PC-3 (cell line): ENCODE measurements at regions of chr9 and their contacts with region 1.

Region 1: DNA sequence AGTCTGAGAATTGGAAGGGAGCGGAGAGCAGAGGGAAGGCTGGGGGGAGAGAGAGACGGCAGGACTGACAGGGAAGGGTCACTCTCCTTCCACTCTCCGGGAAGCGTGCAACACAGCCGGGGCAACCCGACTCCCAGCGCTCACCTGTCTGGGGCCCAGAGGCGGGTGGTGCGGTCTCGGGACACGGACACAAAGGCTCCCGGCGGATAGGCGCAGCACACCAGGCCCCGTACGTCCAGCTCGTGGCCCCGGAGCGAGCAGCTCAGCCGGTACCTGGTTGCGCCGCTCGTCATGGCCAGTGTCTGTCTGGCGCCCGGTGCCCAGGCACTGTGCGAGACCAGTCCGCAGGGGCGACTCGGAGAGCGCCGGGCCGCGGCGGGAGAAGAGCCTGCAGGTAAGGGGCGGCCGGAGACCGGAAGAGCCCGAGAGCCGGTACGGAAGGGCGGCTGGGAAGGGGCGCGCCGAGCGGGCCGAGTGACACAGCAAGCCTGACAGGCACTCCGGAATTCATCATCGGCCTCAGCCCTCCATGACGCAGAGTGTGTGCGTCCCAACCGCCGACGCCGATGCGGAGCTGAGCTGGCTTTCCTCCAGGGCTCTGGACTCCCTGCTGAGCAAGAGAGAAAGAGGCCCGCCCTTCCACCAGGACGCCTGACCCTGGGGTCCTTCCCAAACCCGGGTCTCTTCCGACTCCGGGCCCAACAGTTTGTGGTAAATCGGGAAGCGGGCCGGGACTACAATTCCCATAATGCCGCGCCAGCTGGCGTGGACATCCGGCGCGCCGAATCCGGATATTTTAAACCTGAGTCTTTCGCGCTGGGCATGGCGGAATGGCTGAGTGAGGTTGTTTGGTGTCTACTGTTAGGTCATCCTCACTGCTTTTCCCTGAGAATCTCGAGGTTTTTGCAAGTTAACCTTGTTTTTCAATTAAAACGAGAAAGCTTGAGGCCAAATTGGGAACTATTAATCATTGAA is at the start of gene PLAA:
- DNase-seq: peak; percentile 85
- ATAC-seq: peak; percentile 97
- H3K4me3 ChIP-seq: peak within 1 kb of the TSS; percentile 88
- H3K27ac ChIP-seq: peak within 1 kb of the TSS; percentile 97
- H3K4me1 ChIP-seq: peaks cover 24% of the 10 kb centered on the region
- H3K27me3 ChIP-seq: no peaks in the 10 kb centered on the region
- CTCF ChIP-seq: no peak
- total RNA-seq, gene PLAA: 27.2 and 34.6 TPM in 2 replicates

Region 2: DNA sequence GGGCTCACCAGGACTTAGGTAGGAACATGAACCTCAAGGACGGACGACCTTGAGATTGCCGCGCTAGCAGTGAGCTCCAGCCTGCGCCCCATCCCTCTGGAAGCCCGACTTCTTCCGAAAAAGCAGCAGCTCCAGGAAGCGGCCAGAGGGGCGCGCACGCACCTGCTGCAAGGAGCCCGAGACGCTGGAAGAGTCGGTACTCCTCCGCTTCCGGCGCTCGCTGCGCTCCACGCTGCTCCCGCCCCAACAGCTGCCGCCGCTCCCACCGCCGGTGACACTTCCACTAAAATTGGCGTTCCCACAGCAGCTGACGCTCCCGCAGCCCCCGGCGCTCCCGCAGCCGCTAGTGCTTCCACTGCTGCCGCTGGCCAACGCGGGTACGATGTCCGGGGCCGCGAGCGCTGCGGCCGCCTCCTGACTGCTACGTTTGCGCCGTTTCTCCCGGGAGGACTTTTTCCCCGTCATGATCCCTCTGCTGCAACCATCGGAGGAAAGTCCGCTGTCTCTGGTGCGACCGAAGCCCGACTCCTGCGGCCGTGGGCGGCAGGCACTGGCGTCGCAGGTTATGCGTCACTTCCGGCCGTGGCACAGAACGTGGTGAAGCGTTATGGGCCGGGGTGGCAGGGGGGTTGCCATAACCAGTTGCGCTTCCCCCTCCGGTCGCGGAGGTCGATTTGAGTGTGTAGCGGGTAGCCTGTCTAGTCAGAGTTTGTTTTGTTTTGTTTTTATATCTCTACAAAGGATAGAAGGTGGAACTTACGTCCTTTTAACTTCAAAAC is 54.6 kb before region 1 on chr9 and contains the start of gene CAAP1:
- CTCF ChIA-PET with region 1: no interaction called
- POLR2A ChIA-PET with region 1: interaction called, 3 read pairs
- intact Hi-C with region 1: loop called (anchors 1 kb)
- DNase-seq: peak; percentile 90
- ATAC-seq: peak; percentile 90
- H3K4me3 ChIP-seq: peak within 1 kb of the TSS; percentile 97
- H3K27ac ChIP-seq: peak within 1 kb of the TSS; percentile 91
- H3K4me1 ChIP-seq: peaks cover 6% of the 10 kb centered on the region; the same call in 1 of the 2 replicates
- H3K27me3 ChIP-seq: no peaks in the 10 kb centered on the region
- CTCF ChIP-seq: peak; percentile 43
- total RNA-seq, gene CAAP1: 24.1 and 25.0 TPM in 2 replicates